ENCODE measurements at regions of chr2 and their contacts with region 1.

Region 1: DNA sequence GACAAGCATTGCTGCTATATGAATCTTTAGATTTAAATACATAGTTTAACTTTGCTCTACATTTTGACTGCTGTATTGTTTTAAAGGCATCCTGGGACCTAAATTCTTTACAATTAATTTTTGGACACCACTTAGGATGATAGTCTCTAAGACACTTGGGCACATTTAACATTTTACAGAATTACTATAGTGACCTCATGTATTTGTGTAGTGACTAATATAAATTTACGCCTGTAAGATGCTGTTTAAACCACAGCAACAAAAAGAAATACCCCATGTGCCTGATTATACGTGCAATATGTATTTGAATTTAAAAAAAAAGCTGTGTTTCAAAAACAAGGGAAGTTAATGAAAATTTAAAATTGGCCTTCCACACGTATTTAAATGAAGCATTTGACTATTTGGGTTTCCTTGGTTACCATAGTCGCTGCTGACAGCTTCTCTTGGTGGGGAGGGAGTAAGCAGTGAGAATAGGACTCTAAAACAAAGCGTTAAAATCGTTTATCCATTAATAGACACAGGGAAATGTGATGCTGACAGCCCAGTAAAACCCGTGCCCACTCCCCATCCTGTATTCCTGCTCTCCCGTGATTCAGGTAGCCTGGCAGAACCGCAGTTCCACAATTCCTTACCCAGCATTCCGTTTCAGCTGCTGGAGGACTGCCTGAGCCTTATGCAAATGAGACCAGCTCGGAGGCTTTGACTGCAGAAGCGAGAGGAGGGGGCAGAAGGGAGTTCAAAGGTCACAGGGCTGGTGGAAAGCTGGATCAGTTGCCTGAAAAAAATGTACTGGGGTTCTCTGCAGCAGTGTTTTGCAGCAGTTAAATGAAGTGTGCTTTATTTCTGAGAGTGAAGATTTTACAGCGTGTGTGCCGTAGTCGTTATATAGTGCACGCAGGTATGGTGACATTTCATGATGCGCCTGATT is 104.3 kb downstream of the CSRNP3 start:
- DNase-seq: no peak
- H3K4me3 ChIP-seq: no peak overlapping the region
- CTCF ChIP-seq: no peak
- POLR2A ChIP-seq: no peak

Region 2: DNA sequence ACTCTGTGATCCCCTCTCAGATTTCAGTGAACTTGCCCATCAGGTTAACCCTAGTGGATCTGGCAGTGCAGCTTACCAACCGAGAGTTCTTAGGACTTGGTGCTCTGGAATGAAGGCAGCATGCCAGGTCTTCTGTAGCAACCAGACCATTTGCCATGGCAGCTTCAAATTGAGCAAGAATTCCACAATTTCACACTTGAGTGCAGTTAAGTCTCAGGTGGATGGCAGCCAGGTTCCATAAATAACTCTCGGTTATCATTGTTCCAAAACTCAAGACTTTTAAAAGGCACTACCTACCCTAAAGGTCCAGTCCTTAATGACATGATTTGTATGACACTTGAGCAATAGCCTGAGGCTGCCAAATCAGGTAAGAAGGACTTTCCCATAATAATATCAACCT is 172.1 kb after region 1 on chr2:
- intact Hi-C with region 1: no loop called
- DNase-seq: no peak
- H3K4me3 ChIP-seq: no peak overlapping the region
- CTCF ChIP-seq: no peak
- POLR2A ChIP-seq: no peak

Region 3: DNA sequence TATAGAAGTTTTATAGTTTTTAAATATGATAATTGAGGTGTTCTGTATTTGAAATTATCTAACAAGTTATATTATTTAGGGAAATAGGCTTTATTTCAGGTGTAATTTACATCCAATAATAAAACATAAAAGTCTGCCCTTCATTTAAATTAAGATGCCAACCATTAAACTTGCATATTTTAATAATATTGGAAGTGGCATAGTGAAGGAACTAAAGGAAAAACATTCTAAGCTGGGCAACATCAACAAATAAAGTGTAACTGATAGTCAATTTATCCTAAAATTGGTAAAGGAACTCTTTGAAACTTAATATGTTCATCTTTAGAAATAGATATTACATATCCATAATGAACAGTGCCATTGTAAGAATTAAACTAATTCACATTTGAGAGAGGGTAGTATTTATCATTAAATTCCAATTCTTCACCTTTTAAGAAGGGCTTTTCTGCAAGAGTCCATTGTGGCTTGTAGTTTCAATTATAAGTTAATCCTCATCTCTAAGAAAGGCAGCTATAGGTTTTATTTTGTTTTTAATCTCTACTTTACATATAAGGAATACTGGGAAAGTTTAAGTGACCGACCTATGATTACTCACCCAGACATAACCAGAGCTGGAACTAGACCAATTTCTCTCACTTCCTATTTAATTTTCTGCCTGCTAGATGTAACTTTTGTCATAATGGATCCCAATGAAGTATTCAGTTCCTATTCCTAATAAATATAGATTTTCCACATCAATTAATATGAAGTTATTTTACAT is 1716.0 kb after region 1 on chr2:
- intact Hi-C with region 1: loop called (anchors 10 kb)
- DNase-seq: no peak
- H3K4me3 ChIP-seq: no peak overlapping the region
- CTCF ChIP-seq: no peak
- POLR2A ChIP-seq: no peak